MCF 10A (cell line): ENCODE measurements at regions of chr6 and their contacts with region 1.

Region 1: GRCh38 chr6:113632220-113632864 is 224.8 kb upstream of the MARCKS start:
- DNase-seq: peak; percentile 96
- H3K4me3 Mint-ChIP-seq: peak overlapping the region; percentile 62
- H3K27ac Mint-ChIP-seq: peak overlapping the region; percentile 85
- H3K4me1 Mint-ChIP-seq: peaks cover 29% of the 10 kb centered on the region
- H3K27me3 Mint-ChIP-seq: no peaks in the 10 kb centered on the region
- CTCF ChIP-seq: no peak

Region 2: DNA sequence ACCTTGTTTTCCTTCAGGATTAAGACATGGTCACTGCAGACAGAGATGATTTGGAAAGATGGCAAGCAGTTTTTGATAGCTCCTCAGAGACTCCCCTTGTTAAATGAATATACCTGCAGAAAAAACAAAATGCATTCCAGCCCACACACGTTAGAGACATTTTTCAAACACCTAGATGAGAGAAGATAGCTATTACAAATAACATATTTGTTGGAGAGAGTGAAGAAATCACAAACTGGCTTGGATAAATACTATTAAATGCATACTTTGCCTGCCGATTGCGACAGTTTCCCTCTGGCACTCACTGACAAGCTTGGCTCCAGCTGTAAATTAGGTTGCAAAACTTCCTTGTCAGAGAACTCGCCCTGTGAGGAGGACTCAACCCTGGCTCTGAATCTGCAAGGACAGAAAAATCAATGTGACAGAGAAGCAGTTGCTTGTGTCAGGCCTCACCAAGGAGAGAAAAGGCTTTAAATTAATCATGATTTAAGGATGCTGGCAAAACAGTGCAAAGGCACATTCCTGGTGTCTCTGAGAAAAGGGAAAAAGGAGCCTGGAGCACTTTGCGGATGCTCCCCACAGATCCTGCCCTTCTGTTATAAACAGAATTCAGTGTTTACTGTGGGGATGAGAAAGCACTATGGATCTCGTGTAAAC is 198.9 kb before region 1 on chr6:
- CTCF ChIA-PET with region 1: no interaction called
- POLR2A ChIA-PET with region 1: interaction called, 23 read pairs
- intact Hi-C with region 1: no loop called
- DNase-seq: peak; percentile 95
- H3K4me3 Mint-ChIP-seq: peak overlapping the region; percentile 57
- H3K27ac Mint-ChIP-seq: peak overlapping the region; percentile 43
- H3K4me1 Mint-ChIP-seq: peaks cover 21% of the 10 kb centered on the region
- H3K27me3 Mint-ChIP-seq: no peaks in the 10 kb centered on the region
- CTCF ChIP-seq: no peak

Region 3: GRCh38 chr6:113447088-113447831 is 185.1 kb before region 1 on chr6:
- CTCF ChIA-PET with region 1: no interaction called
- POLR2A ChIA-PET with region 1: interaction called, 10 read pairs
- intact Hi-C with region 1: no loop called
- DNase-seq: peak; percentile 88
- H3K4me3 Mint-ChIP-seq: no peak overlapping the region
- H3K27ac Mint-ChIP-seq: peak overlapping the region; percentile 88
- H3K4me1 Mint-ChIP-seq: peaks cover 41% of the 10 kb centered on the region
- H3K27me3 Mint-ChIP-seq: no peaks in the 10 kb centered on the region
- CTCF ChIP-seq: no peak

Region 4: DNA sequence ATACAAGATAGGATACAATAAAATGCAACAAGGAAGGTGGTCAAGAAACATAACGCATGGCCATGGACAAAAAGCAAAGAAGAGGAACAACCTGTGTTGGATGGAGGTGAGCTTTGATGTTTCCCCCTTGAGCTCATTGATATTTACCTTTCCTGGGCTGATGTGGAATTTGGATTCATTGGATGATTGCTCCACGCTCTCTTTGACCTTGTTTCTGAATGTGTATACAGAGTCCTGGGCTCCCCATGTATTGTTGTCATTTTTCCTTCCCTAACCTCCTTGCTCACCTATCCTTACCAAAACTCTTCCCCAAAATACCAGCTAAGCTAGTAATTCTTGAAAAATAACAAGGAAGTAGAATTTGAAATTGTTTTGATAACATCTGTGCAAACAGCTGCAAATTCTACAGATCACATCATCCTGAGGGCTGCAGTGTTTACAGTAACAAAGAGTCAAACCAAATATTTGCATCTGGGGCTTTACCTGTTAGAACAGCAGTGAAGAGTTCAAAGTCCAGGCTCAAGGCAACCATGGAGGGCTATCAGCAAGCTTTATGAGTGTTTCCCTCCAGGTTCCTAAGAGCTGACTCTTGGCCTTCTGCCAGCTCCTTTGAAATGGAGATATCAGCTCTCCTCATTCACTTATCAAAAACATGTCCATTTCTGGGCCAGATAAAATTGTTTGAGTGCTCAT is 10.5 kb after region 1 on chr6:
- CTCF ChIA-PET with region 1: interaction called, 6 read pairs
- POLR2A ChIA-PET with region 1: interaction called, 58 read pairs
- intact Hi-C with region 1: loop called (anchors 2 kb)
- DNase-seq: peak; percentile 20
- H3K4me3 Mint-ChIP-seq: no peak overlapping the region
- H3K27ac Mint-ChIP-seq: no peak overlapping the region
- H3K4me1 Mint-ChIP-seq: peaks cover 14% of the 10 kb centered on the region
- H3K27me3 Mint-ChIP-seq: no peaks in the 10 kb centered on the region
- CTCF ChIP-seq: no peak

Region 5: DNA sequence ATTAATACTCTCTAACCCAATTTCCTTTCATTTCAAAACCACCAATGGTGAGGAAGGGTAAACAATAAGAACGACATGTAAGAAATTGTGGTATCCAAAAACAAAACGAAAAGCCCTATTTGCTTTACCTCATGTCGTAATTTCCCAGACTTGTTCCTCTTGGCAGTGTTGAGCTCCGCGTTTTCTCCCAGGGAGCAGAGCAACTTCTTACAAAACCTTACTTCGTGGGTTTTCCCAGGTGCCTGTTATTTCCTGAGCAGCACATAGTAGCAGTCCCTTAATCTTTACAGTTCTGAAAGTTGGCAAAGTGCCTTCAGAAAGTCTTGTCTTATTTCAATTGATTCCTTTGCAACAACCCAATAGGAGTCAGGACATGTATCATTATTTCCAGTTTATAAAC is 16.9 kb after region 1 on chr6:
- CTCF ChIA-PET with region 1: interaction called, 6 read pairs
- POLR2A ChIA-PET with region 1: interaction called, 58 read pairs
- intact Hi-C with region 1: loop called (anchors 2 kb)
- DNase-seq: peak; percentile 95
- H3K4me3 Mint-ChIP-seq: peak overlapping the region; percentile 62
- H3K27ac Mint-ChIP-seq: peak overlapping the region; percentile 93
- H3K4me1 Mint-ChIP-seq: peaks cover 35% of the 10 kb centered on the region
- H3K27me3 Mint-ChIP-seq: no peaks in the 10 kb centered on the region
- CTCF ChIP-seq: no peak

Region 6: DNA sequence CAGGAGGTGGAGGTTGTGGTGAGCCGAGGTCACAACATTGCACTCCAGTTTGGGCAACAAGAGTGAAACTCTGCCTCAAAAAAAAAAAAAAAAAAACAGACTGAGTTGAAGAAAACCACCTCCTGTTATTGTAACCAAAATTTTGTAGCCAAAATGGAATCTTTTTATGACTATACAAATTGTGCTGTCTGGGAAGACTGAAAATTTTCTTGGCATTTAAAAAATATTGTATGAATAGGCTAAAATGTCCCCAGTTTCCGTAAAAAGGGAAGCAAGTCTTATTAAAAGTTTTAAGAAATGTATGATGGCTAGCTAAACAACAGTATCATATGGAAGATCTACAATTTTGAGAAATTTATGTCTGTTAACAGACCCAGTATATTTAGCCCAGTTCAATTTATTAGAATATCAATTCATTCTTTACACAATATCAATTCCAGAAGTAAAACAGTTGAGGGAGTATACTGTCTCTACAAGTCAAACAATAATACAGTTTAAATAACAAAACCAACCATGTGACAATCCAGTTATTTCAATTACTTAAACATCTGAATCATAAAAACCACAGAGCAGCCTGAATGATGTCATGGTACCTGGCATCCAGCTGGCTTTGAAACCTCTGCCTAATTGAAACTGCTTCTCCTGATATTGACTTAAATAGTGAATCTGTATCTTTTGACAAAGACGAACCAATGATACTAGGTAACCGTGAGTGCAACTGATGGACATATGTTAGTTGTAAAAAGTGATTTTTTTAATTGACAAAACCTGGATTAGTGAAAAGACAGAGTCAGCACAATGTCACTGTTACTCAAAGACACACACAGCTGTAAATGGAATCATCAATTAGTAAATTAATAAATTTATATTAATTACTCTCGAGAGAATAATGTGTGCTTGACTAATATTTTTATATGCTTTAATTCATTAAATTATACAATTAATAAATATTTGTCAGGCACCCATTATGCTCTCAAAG is 58.2 kb after region 1 on chr6:
- CTCF ChIA-PET with region 1: no interaction called
- POLR2A ChIA-PET with region 1: interaction called, 8 read pairs
- intact Hi-C with region 1: loop called (anchors 5 kb)
- DNase-seq: peak; percentile 88
- H3K4me3 Mint-ChIP-seq: no peak overlapping the region
- H3K27ac Mint-ChIP-seq: no peak overlapping the region
- H3K4me1 Mint-ChIP-seq: peaks cover 29% of the 10 kb centered on the region
- H3K27me3 Mint-ChIP-seq: no peaks in the 10 kb centered on the region
- CTCF ChIP-seq: no peak

Region 7: GRCh38 chr6:113763883-113764282 is 131.5 kb after region 1 on chr6:
- CTCF ChIA-PET with region 1: no interaction called
- POLR2A ChIA-PET with region 1: no interaction called
- intact Hi-C with region 1: no loop called
- DNase-seq: peak; percentile 92
- H3K4me3 Mint-ChIP-seq: no peak overlapping the region
- H3K27ac Mint-ChIP-seq: peak overlapping the region; percentile 81
- H3K4me1 Mint-ChIP-seq: peaks cover 14% of the 10 kb centered on the region
- H3K27me3 Mint-ChIP-seq: no peaks in the 10 kb centered on the region
- CTCF ChIP-seq: no peak